GM10248 (cell line): ENCODE measurements at regions of chr13 and their contacts with region 1.

Region 1: GRCh38 chr13:48037346-48038173 is at the start of gene NUDT15:
- DNase-seq: peak; percentile 95
- CTCF ChIP-seq: peak; percentile 97

Region 2: DNA sequence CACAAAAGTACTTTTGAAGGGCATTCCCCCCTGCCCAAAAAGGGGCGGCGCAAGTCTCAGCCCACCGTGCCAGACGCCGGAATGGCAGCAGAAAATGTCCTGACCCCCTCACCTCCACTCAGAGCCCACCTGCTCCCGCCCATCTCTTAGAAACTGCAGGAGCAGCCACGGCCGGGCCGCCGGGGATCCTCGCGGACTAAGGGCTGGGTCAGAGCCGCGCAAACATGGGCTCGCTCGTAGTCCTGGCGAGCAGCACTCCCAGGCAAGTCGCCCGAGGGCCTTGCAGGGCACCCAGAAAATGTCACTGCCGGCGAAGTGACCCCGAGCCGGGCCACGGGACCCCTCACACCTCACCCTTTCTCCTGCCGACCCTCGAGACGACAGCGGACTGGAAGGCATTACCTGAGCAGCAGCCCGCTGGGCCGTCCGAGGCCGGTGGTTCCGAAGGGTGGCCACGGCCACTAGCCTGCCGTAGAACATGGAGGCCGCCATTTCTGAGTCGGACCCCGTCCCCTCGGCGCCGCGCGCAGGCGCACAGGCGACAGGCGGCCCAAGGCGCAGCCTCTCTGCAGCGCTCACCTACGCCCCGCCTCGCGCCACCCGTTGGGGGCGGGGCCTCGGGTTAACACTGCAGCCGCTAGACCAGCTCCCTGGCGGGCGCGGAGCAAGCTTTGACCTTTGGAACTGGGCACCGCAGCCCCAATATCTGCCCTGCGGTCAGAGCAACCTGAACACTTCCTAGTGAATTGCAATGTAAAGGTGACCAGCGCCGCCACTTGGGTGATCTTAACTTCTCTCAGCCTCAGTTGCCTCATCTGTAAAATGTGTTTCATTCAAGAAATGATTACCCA is 36.6 kb before region 1 on chr13 and contains the start of gene SUCLA2:
- CTCF ChIA-PET with region 1: interaction called, 12 read pairs
- POLR2A ChIA-PET with region 1: no interaction called
- DNase-seq: peak; percentile 99
- CTCF ChIP-seq: no peak

Region 3: DNA sequence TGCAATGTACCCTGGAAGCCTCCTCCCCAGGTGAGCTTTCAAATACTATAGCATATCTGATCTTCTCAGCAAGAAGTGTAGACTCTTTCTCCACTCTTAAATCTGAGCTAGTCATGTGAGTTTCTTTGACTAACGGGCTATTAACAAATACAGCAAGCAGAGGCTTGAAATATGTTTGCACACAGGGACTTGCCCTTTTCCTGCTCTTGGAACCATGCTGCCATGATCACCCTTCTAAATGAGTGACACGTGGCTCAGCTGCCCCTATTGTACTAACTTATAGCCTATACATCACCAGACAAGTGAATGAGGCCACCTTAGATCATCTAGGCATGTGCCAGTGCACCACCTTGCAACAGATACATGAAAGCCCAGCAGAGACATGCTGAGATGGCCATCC is 23.2 kb before region 1 on chr13:
- CTCF ChIA-PET with region 1: interaction called, 15 read pairs
- POLR2A ChIA-PET with region 1: no interaction called
- DNase-seq: no peak
- CTCF ChIP-seq: no peak

Region 4: GRCh38 chr13:48050550-48050949 is 13.0 kb after region 1 on chr13:
- CTCF ChIA-PET with region 1: interaction called, 73 read pairs
- POLR2A ChIA-PET with region 1: no interaction called
- DNase-seq: no peak
- CTCF ChIP-seq: no peak

Region 5: DNA sequence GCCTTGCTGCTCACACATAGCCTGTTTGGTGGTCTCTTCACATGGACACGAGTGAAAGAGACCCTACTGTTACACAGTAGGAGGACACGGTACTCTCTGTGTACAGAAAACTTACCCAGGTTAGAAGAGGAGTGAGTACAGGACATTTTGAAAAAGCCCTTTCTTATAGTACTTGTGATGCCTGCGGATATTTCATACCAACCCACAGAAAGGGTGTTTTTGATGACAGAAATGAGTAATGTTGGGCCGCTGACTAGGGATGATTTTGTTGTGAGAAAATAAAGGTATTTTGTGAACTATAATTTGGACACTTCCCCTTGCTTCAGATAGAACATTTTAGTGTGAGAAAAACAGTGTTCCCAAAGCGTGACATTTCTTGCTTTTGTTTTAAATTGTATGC is 18.2 kb after region 1 on chr13:
- CTCF ChIA-PET with region 1: interaction called, 73 read pairs
- POLR2A ChIA-PET with region 1: interaction called, 5 read pairs
- DNase-seq: no peak
- CTCF ChIP-seq: no peak

Region 6: DNA sequence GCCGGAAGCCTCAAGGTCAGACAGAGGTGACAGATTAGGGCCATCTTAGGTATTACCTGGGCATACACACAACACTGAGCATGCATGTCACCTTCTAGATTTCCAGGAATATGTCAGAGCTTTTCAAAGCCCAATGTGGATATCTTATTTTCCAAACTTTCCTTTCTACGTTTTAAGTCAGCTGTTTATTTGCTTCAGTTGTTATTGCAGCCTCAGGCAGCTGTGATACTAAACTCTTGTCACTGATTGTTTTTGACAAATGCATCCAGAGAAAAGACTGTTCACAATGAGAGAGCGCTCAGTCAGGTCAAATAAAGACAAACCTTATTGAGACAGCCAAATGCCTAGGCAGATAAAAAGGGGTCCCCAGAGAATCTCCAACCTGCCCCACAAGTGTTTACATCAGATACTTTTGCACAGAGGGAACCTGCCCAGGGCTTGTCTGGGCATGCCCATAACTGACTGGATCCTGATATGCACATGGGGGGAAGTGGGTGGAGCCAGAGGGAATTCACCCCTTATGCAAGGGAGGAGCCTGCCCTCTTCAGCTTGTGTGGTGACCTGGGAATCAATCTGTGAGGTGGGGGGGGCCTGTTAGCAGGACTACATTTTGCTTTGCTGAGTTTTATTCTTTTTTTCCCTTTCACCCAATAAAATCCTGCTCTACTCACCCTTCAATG is 28.9 kb after region 1 on chr13:
- CTCF ChIA-PET with region 1: interaction called, 12 read pairs
- POLR2A ChIA-PET with region 1: no interaction called
- DNase-seq: no peak
- CTCF ChIP-seq: no peak

Region 7: DNA sequence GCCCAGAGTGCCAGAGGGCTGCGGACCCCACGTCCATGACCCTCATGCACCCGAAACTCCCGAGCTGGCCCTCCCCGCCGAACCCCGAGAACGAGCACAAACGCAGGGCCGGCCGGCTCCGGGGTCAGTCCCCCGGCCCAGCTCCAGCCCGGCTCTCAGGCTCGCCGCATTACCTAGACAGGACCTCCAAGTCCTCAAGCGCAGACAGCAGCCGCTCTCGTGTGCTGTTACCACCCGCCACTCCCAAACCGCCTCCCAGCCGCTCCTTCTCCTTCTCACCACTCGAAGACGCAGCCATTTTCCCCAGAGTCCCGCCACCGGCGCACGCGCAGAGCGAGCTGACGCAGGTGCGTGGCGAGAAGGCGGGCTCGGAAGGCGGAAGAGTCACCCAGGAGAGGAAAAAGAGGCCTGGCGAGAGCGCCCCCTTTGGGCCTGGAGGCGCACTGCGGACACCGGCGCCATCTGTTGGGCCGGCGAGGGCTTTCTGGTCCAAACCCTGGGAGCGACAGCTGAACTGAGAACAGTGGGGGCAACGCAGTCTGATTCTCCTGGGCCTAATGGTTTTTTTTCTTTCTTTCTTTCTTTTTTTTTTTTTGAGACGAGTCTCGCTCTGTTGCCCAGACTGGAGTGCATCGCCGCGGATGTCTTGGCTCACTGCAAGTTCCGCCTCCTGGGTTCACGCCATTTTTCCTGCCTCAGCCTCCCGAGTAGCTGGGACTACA is 57.4 kb after region 1 on chr13 and contains the start of gene MED4:
- CTCF ChIA-PET with region 1: interaction called, 29 read pairs
- POLR2A ChIA-PET with region 1: no interaction called
- DNase-seq: peak; percentile 98
- CTCF ChIP-seq: peak; percentile 100